ENCODE measurements at regions of chr5 and their contacts with region 1.

Region 1: GRCh38 chr5:109063223-109063622 is 315.5 kb downstream of the FER start:
- DNase-seq: no peak
- H3K4me3 ChIP-seq: no peak overlapping the region
- H3K27ac ChIP-seq: no peak overlapping the region
- H3K4me1 ChIP-seq: no peaks in the 10 kb centered on the region
- H3K27me3 ChIP-seq: no peaks in the 10 kb centered on the region
- CTCF ChIP-seq: no peak
- POLR2A ChIP-seq: no peak

Region 2: GRCh38 chr5:110386782-110387181 is 1323.6 kb after region 1 on chr5:
- intact Hi-C with region 1: loop called (anchors 5 kb)
- DNase-seq: no peak
- H3K4me3 ChIP-seq: no peak overlapping the region
- H3K27ac ChIP-seq: no peak overlapping the region
- H3K4me1 ChIP-seq: no peaks in the 10 kb centered on the region
- H3K27me3 ChIP-seq: no peaks in the 10 kb centered on the region
- CTCF ChIP-seq: no peak
- POLR2A ChIP-seq: no peak